ENCODE measurements at regions of chr12 and their contacts with region 1.

Region 1: GRCh38 chr12:54993161-54993835 is 8.7 kb upstream of the TESPA1 start:
- DNase-seq: peak; percentile 17 to 62
- H3K4me3 ChIP-seq: no peak overlapping the region
- H3K27ac ChIP-seq: no peak overlapping the region
- H3K4me1 ChIP-seq: no peaks in the 10 kb centered on the region
- H3K27me3 ChIP-seq: peaks cover 28% of the 10 kb centered on the region
- CTCF ChIP-seq: peak; percentile 89

Region 2: DNA sequence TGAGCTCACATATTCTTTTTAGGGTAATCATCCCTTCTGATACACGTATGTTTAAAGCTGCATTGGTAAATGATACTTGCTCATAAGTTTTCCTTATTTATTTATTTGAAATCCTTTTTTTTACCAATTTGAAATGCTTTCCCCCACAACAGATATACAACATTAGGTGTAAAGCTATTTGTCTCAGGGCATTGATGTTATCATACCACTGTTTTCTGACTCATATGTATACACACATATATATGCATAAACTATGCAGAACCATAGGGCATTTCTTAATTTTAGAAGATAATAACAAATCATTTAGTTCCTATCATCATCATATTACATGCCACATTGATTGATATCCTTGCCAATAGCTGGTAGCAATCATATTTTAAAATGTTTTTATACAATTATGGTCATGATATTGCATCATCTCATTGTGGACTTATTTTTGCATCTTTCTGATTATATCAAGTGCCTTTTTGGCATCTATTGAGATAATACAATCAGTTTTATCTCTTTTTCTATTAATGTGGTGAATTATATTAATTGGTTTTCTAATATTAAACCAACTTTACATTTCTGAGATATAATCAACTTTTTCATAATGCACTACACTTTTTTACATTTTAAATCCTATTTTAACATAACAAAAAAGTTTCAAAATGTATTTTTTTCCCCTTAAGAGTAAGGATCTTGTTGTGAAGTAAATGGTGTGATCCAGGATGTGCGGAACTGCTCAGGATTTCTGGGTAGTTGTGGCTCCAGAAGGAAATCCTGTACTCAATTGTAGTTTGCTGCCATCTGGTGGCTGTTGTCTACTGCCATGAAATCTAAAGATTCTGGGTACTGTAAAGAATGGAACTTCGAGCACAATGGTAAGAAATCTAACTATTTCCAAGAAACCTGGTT is 149.6 kb after region 1 on chr12:
- CTCF ChIA-PET with region 1: interaction called, 6 read pairs
- POLR2A ChIA-PET with region 1: no interaction called
- intact Hi-C with region 1: loop called (anchors 1 kb)
- DNase-seq: peak in 1 of 2 experiments; percentile 10
- H3K4me3 ChIP-seq: no peak overlapping the region
- H3K27ac ChIP-seq: no peak overlapping the region
- H3K4me1 ChIP-seq: no peaks in the 10 kb centered on the region
- H3K27me3 ChIP-seq: peaks cover 3% of the 10 kb centered on the region; the same call in 1 of the 2 replicates
- CTCF ChIP-seq: peak; percentile 67

Region 3: GRCh38 chr12:55619354-55620138 is 626.2 kb after region 1 on chr12:
- CTCF ChIA-PET with region 1: no interaction called
- POLR2A ChIA-PET with region 1: no interaction called
- intact Hi-C with region 1: loop called (anchors 2 kb)
- DNase-seq: peak; percentile 47 to 88
- H3K4me3 ChIP-seq: no peak overlapping the region
- H3K27ac ChIP-seq: no peak overlapping the region
- H3K4me1 ChIP-seq: no peaks in the 10 kb centered on the region
- H3K27me3 ChIP-seq: peaks cover 14% of the 10 kb centered on the region; the same call in 1 of the 2 replicates
- CTCF ChIP-seq: peak; percentile 92

Region 4: DNA sequence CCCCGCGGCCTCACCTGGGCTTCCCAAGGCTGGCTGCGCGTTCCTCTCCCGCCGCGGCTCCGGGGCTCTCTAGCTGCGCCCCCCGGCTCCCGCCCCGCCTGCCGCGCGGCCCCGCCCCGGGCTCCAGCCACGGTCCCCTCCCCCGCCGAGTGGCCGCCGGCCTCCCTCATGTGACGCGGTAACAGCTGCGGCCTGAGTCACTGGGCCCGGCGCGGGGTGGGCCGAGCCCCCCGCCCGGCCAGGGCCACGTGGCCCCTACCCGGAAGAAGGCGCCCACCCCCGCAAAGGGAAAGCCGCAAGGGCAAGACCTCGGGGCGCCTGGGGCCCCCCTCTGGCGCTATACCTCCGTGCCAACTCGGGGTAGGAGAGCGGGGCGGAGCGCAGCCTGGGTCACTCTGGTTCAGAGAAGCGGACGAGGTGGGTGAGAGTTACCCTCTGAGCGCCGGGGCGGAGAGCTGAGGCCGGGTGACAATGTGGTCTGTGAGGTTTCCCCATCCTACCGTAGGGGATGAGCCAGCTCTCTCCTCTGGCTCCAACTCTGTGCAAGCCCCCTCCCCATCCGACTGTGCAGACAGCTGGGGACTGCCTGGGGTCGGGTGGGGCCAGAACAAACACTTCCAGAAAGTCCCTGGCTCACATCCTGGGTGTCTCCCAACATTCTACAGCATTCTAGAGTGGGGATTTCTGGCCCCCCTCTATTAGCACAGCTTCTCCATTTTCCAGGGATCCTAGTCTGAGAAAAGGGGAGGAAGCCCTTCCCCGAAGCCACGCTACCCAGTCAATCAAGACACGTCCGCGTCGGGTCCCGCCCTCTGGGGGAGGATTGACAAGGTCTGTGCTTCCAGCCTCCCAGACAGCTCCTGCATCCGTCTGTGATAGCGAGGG is 735.9 kb after region 1 on chr12 and contains the start of gene CD63:
- CTCF ChIA-PET with region 1: no interaction called
- POLR2A ChIA-PET with region 1: no interaction called
- intact Hi-C with region 1: loop called (anchors 10 kb)
- DNase-seq: peak; percentile 73 to 80
- H3K4me3 ChIP-seq: peak within 1 kb of the TSS; percentile 100
- H3K27ac ChIP-seq: peak within 1 kb of the TSS; percentile 84
- H3K4me1 ChIP-seq: peaks cover 22% of the 10 kb centered on the region
- H3K27me3 ChIP-seq: no peaks in the 10 kb centered on the region
- CTCF ChIP-seq: no peak; the same call in 1 of the 2 replicates
- total RNA-seq, gene CD63: 434 and 536 TPM in 2 replicates

Region 5: GRCh38 chr12:55746147-55746912 is 753.0 kb after region 1 on chr12:
- CTCF ChIA-PET with region 1: interaction called, 20 read pairs
- POLR2A ChIA-PET with region 1: no interaction called
- intact Hi-C with region 1: no loop called
- DNase-seq: no peak
- H3K4me3 ChIP-seq: no peak overlapping the region
- H3K27ac ChIP-seq: no peak overlapping the region
- H3K4me1 ChIP-seq: peaks cover 12% of the 10 kb centered on the region; the same call in 1 of the 2 replicates
- H3K27me3 ChIP-seq: no peaks in the 10 kb centered on the region
- CTCF ChIP-seq: no peak

Region 6: DNA sequence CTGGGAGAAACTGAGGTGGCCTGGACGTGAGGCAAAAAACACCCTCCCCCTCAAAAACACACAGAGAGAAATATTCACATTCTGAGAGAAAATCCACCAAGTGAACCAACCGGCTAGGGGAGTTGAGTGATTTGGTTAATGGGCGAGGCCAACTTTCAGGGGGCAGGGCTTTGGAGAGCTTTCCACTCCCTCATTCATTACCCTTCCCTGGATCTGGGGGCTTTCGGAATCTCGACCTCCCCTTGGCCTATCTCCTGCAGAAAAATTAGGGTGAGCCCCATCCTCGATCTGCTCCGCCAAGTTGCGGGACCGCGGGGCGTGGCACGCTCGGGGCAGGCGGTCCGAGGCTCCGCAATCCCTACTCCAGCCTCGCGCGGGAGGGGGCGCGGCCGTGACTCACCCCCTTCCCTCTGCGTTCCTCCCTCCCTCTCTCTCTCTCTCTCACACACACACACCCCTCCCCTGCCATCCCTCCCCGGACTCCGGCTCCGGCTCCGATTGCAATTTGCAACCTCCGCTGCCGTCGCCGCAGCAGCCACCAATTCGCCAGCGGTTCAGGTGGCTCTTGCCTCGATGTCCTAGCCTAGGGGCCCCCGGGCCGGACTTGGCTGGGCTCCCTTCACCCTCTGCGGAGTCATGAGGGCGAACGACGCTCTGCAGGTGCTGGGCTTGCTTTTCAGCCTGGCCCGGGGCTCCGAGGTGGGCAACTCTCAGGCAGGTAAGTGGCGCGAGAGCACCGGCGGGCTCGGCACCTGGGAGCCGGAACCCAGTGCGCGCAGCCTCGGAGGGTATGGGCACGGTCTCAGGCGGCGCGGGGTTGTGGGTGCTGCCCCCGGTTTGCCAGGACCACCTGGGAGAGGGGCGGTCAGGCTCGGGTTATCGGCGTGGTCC is 1086.6 kb after region 1 on chr12 and contains the start of gene ERBB3:
- CTCF ChIA-PET with region 1: no interaction called
- POLR2A ChIA-PET with region 1: no interaction called
- intact Hi-C with region 1: no loop called
- DNase-seq: peak; percentile 79 to 92
- H3K4me3 ChIP-seq: peak within 1 kb of the TSS; percentile 69
- H3K27ac ChIP-seq: peak within 1 kb of the TSS; percentile 86
- H3K4me1 ChIP-seq: peaks cover 26% of the 10 kb centered on the region
- H3K27me3 ChIP-seq: no peaks in the 10 kb centered on the region
- CTCF ChIP-seq: no peak
- total RNA-seq, gene ERBB3: 127 and 145 TPM in 2 replicates